Activated naive CD8-positive, alpha-beta T cell treated with anti-CD3 and anti-CD28 coated beads, Interleukin-2, amount 10 ng/mL, durations not matched to agents 7 days and 5 days (primary cell): ENCODE measurements at regions of chr7 and their contacts with region 1.

Region 1: DNA sequence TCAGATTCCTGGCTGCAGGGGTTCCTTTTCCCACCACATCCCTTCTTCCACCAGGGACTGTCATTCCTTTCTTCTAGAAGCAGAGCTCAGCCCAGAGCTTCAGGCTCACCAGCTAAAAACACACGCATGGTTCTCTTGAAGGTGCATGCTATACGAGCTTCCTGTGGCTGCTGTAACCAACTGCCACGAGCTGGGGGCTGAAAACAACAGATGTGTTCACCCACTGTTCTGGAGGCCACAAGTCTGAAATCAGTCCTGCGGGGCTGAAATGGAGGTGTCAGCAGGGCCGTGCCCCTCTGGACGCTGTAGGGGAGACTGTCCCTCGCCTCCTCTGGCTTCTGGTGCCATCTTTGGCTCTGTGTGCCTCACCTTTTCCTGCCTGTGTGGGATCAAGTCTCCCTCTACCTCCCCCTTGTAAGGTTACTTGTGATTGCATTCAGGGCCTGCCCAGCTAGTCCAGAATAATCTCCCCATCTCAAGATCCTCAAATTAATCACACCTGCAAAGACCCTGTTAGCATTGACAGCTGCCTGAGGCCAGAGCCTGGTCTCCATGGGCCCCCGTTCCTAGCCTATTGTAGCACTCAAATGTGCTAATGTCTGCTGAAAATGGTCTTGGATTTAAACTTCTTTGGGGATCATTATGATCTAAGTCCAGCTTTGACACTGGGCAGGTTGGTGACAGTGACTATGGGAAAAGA is 13.7 kb downstream of the RAB19 start:
- DNase-seq: peak; percentile 39
- ATAC-seq: peak; percentile 91
- H3K4me3 Mint-ChIP-seq: peak overlapping the region; percentile 6
- H3K27ac Mint-ChIP-seq: peak overlapping the region; percentile 80
- H3K4me1 Mint-ChIP-seq: peaks cover 10% of the 10 kb centered on the region
- H3K27me3 Mint-ChIP-seq: no peaks in the 10 kb centered on the region

Region 2: DNA sequence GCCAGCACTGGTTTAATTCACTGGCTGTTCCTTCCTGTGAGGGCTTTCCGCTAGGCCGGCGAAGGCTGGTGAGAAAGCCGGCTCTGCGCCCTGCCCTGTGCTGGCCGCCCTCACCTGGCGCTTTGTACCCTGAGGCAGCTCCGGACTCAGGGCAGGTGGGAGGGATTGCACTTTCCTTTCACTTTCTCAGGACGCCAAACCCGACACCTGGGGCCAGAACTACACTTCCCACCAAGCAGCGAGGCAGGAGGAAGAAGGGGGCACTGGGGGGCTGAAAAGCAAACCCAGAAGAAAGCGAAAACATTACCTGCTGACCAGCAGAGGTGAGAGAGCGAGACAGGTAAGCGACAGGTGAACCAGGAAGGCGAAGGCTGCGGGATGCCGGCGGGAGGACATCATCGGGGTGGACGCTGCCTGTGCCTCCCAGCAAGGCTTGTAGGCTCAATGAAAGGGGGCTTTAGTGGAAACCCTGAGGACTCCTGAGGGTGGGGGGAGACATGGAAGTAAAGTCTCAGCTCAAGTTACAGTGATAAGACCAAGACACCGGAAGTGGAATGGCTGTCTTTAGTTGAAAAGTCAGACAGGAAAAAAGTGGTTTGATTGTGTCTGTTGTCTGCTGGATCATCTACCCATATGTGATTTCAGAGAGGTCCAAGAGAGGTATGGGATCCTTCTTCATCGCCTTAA is 13.6 kb before region 1 on chr7 and contains the start of gene RAB19:
- POLR2A ChIA-PET with region 1: interaction called, 10 read pairs
- DNase-seq: peak; percentile 68
- ATAC-seq: peak; percentile 92
- H3K4me3 Mint-ChIP-seq: peak within 1 kb of the TSS; percentile 96
- H3K27ac Mint-ChIP-seq: peak within 1 kb of the TSS; percentile 99
- H3K4me1 Mint-ChIP-seq: peaks cover 20% of the 10 kb centered on the region
- H3K27me3 Mint-ChIP-seq: no peaks in the 10 kb centered on the region
- total RNA-seq, gene RAB19: 8.1 to 9.1 TPM